ENCODE measurements at regions of chr15 and their contacts with region 1.

Region 1: GRCh38 chr15:41671656-41672648 is 11.7 kb downstream of the MGA start:
- DNase-seq: no peak
- H3K4me3 Mint-ChIP-seq: no peak overlapping the region
- H3K27ac Mint-ChIP-seq: no peak overlapping the region
- H3K4me1 Mint-ChIP-seq: no peaks in the 10 kb centered on the region
- H3K27me3 Mint-ChIP-seq: no peaks in the 10 kb centered on the region
- CTCF ChIP-seq: no peak

Region 2: GRCh38 chr15:41660235-41661077 is 11.5 kb before region 1 on chr15 and contains the start of gene MGA:
- CTCF ChIA-PET with region 1: interaction called, 3 read pairs
- POLR2A ChIA-PET with region 1: interaction called, 19 read pairs
- intact Hi-C with region 1: no loop called
- DNase-seq: peak; percentile 18
- H3K4me3 Mint-ChIP-seq: peak within 1 kb of the TSS; percentile 86
- H3K27ac Mint-ChIP-seq: peak within 1 kb of the TSS; percentile 61
- H3K4me1 Mint-ChIP-seq: peaks cover 9% of the 10 kb centered on the region
- H3K27me3 Mint-ChIP-seq: no peaks in the 10 kb centered on the region
- CTCF ChIP-seq: no peak
- total RNA-seq, gene MGA: 15.9 and 17.5 TPM in 2 replicates

Region 3: GRCh38 chr15:41713047-41713446 is 41.1 kb after region 1 on chr15:
- CTCF ChIA-PET with region 1: no interaction called
- POLR2A ChIA-PET with region 1: no interaction called
- intact Hi-C with region 1: no loop called
- DNase-seq: no peak
- H3K4me3 Mint-ChIP-seq: no peak overlapping the region
- H3K27ac Mint-ChIP-seq: no peak overlapping the region
- H3K4me1 Mint-ChIP-seq: no peaks in the 10 kb centered on the region
- H3K27me3 Mint-ChIP-seq: no peaks in the 10 kb centered on the region
- CTCF ChIP-seq: no peak

Region 4: GRCh38 chr15:41832875-41833274 is 160.9 kb after region 1 on chr15:
- CTCF ChIA-PET with region 1: no interaction called
- POLR2A ChIA-PET with region 1: no interaction called
- intact Hi-C with region 1: no loop called
- DNase-seq: peak; percentile 66
- H3K4me3 Mint-ChIP-seq: no peak overlapping the region
- H3K27ac Mint-ChIP-seq: no peak overlapping the region
- H3K4me1 Mint-ChIP-seq: peaks cover 13% of the 10 kb centered on the region
- H3K27me3 Mint-ChIP-seq: no peaks in the 10 kb centered on the region
- CTCF ChIP-seq: no peak